GM10248 (cell line): ENCODE measurements at regions of chr7 and their contacts with region 1.

Region 1: DNA sequence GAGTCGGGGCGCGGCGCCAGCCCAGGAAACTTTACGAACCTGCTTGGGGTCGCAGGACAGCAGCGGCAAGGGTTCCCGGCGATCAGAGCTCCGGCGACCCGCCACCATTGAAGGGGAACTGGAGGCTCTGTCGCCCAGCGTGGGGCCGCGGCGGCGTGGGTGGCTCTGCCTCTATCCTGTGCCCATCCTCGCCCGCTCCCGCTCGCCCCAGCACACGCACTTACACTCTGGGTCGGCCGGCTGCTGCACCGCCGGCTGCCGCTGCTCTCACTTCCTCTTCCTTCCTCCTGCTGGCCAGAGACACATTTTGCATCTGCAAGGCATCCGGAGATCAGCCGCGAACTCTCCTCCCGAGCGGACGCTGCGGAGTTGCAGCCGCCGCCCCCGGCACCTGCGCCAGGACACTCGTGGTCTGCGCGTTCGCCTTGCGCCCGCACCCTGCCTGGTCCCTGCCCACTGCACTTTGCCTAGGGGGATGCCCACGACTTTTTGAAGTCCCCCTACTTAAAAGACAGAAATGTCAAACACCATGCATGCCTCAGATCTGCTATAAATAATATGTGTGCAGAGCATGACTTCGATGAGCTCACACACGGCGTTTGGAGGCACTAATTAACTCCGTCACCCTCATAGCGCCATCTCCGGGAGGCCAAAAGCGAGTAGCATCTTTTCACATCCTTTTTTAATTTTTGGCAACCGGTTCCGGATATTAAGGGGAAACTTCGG is at the start of gene ELMO1:
- DNase-seq: peak; percentile 89
- CTCF ChIP-seq: peak; percentile 31

Region 2: DNA sequence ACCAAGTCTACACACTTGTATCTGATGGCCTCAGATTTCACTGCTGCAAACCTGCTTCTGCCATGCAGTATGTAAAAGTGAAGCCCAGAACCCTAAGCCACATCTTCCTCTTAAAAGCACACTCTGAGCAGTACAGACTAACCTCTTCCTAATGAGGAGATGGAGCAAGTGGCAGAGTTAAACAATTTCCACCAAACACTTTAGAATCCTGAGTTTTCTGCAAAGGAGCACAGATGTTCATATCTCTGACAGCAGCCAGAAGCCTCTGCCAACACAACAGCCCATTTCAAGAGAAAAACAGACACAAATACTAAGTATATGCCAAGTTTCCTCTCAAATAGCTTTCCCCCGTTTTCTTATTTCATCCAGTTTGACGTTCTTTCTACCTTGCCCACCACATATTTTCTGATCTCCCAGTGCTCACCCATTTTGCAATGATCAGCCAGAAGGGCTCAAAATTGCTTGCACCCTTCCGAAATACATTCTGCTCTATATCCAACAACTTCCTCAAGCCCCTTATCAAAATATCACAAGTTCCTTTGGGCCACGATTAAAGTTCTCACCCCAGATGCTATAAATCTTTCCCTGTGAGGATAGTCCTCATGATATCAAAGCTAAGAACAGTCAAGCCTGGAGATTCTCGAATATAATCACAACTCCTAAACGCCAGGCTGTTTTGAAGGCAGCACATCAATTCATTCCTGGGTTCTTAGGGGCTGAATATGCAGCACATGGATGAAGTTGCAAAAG is 27.7 kb before region 1 on chr7:
- CTCF ChIA-PET with region 1: no interaction called
- POLR2A ChIA-PET with region 1: no interaction called
- DNase-seq: no peak
- CTCF ChIP-seq: no peak

Region 3: GRCh38 chr7:37435156-37435855 is 13.5 kb before region 1 on chr7:
- CTCF ChIA-PET with region 1: interaction called, 12 read pairs
- POLR2A ChIA-PET with region 1: no interaction called
- DNase-seq: no peak
- CTCF ChIP-seq: no peak